GM10248 (cell line): ENCODE measurements at regions of chr3 and their contacts with region 1.

Region 1: GRCh38 chr3:45656575-45657363 is 32.4 kb upstream of the SACM1L start:
- DNase-seq: peak; percentile 80
- CTCF ChIP-seq: peak; percentile 93

Region 2: GRCh38 chr3:44995142-44995770 is 661.5 kb before region 1 on chr3:
- CTCF ChIA-PET with region 1: no interaction called
- POLR2A ChIA-PET with region 1: no interaction called
- DNase-seq: no peak
- CTCF ChIP-seq: no peak

Region 3: DNA sequence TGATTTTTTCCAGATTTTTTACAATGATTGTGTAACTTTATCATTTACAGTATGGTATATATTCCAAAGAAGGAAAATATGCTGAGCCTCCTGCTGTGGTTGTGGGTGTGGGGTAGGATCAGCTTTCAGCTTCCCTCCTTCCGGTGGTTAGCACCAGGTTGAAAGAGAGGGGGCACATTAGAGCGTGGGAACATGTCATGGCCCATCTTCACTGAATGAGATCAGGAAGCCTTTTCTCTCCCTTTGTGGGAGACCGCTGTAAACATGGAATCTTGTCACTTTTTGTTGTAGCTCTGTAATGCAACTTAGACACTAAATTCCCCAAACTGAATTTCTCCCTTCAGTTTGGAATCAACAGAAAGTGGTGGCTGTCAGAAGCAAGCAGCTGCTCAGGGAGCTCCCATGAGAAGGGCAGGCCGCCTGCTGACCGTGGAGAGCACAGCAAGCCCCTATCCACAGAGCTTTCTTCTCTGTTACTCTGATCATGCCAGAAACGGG is 148.9 kb before region 1 on chr3:
- CTCF ChIA-PET with region 1: interaction called, 84 read pairs
- POLR2A ChIA-PET with region 1: no interaction called
- DNase-seq: no peak
- CTCF ChIP-seq: no peak

Region 4: DNA sequence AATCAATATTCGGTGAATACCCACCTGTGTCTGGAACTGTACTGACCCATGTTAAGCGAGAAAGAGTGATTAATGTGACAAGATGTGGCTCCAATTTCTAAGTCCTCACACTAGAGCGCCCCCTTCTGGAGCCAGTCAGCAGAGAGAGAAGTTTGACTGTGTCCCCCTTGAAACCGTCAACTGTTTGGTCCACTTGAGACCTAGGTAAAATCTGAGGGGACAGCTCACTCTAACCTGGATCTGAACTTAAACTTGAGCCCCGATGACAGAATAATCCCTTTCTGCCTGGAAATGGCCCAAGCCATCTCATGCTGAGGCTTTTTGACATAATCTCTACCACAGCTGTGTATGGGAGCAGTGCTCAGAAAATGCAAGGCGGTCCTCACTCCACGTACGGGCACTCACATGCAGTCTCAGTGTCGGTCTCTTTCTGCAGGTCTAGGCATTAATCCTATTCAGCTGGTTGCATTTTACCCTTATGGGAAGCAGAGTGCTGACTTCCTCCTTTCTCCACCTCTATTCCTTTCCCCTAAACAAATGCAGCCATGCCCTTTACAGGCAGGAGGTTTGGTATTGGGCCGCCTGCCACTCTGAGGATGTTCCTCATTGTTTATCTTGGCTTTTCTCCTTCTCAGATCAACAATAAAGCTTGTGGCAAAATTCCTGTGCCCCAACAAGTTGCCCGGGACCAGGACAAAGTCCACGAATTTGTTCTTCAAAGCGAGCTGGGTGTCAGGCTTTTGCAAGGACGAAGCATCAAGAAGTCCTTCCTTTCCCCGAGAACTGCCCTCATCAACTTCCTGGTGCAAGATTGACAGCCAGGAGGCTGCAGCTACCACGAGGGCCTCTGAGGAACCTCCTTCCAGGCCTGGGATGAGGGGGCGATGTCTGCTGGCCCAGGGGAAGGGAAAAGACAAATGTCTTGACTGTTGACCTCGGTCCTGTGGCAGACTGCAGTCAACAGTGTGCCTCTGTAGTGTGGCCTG is 109.8 kb before region 1 on chr3:
- CTCF ChIA-PET with region 1: interaction called, 25 read pairs
- POLR2A ChIA-PET with region 1: no interaction called
- DNase-seq: no peak
- CTCF ChIP-seq: peak; percentile 31

Region 5: DNA sequence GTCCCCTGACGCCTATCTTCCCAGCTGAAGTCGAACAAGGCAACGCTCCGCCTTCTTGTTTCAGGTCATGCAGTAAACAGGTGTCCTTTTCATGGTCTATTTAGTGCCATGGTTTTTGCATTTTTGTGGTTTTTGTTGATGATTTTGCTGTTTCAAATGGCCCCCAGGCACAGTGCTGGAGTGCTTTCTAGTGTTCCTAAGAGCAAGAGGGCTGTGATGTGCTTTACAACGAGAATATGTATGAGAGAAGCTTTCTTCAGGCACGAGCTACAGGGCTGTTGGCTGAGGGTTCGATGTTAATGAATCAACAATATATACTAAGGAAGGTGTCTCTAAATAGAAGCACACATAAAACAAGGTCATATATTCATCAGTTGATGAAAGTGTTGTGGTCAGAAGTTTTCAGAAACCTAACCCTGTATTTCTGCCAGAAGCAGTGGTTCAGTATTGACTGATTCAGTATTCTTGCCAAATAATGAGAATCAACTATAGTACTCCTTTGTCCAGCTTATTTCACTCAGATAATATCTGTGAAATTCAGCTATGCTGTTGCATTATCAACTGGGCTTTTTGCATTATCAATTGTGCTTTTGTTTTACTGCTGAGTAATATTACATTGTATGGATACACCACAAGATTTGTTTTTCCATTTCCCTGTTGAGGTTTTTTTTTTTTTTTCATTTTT is 43.7 kb before region 1 on chr3:
- CTCF ChIA-PET with region 1: interaction called, 17 read pairs
- POLR2A ChIA-PET with region 1: no interaction called
- DNase-seq: peak; percentile 45
- CTCF ChIP-seq: no peak

Region 6: DNA sequence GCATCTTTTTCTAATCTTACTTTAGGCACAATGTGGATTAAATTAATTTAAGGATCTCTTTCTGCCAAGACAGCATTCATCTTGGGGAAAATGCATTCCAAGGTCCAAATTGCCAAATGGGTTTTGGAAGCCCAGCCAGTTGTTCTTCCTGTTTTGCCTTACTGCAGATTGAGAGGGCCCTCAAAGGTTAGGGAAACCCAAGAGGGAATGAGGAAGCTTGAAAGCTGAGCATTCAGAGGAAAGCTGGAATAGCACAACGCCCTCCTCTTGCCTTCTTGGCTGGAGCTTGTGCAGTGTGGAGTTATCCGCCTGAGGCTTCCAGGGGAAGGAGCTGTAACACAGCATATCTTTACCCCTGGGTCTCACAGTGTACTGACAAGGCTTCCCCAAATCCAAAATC is 14.2 kb after region 1 on chr3:
- CTCF ChIA-PET with region 1: interaction called, 26 read pairs
- POLR2A ChIA-PET with region 1: no interaction called
- DNase-seq: no peak
- CTCF ChIP-seq: no peak

Region 7: GRCh38 chr3:45915518-45916231 is 258.9 kb after region 1 on chr3:
- CTCF ChIA-PET with region 1: no interaction called
- POLR2A ChIA-PET with region 1: no interaction called
- DNase-seq: peak; percentile 90
- CTCF ChIP-seq: no peak